ENCODE measurements at regions of chr1 and their contacts with region 1.

Region 1: GRCh38 chr1:193009501-193009900 is 49.7 kb downstream of the UCHL5 start:
- DNase-seq: no peak
- H3K4me3 ChIP-seq: no peak overlapping the region
- H3K4me3 Mint-ChIP-seq: no peak overlapping the region
- H3K27ac ChIP-seq: no peak overlapping the region
- H3K27ac Mint-ChIP-seq: peak overlapping the region in 3 of 7 donors; percentile 17 to 58 (median 52)
- H3K4me1 ChIP-seq: peaks cover 12 to 22% of the 10 kb centered on the region in 2 donors
- H3K4me1 Mint-ChIP-seq: peaks cover 22% of the 10 kb centered on the region
- H3K27me3 ChIP-seq: no peaks in the 10 kb centered on the region
- H3K27me3 Mint-ChIP-seq: no peaks in the 10 kb centered on the region
- CTCF ChIP-seq: no peak

Region 2: DNA sequence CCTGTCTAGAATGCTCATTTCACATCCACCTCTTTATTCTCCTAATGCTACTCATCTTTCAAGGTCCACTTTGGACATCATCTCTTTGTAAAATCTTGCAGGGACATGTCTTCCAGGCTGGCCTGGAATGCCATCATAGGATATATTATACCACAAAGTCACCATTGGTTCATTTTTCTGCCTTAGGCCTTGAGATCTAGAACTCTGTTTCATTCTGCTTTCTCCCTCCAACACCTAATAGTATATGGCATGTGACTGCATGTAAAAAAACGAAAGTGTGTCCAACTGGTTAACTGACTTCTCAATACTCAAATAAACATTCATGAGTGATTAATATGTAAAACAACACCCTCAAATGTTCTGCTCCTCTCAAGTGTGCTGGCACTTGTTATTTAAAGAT is 116.6 kb before region 1 on chr1:
- intact Hi-C with region 1: loop called in 1 of 2 experiments (anchors 10 kb)
- DNase-seq: no peak
- H3K4me3 ChIP-seq: no peak overlapping the region
- H3K4me3 Mint-ChIP-seq: no peak overlapping the region
- H3K27ac ChIP-seq: no peak overlapping the region
- H3K27ac Mint-ChIP-seq: no peak overlapping the region
- H3K4me1 ChIP-seq: no peaks in the 10 kb centered on the region
- H3K4me1 Mint-ChIP-seq: no peaks in the 10 kb centered on the region
- H3K27me3 ChIP-seq: no peaks in the 10 kb centered on the region
- H3K27me3 Mint-ChIP-seq: peaks cover 0 to 3% (median 3%) of the 10 kb centered on the region in 3 donors
- CTCF ChIP-seq: no peak

Region 3: GRCh38 chr1:193192586-193192985 is 183.1 kb after region 1 on chr1:
- intact Hi-C with region 1: no loop called
- DNase-seq: no peak
- H3K4me3 ChIP-seq: no peak overlapping the region
- H3K4me3 Mint-ChIP-seq: no peak overlapping the region
- H3K27ac ChIP-seq: no peak overlapping the region
- H3K27ac Mint-ChIP-seq: peak overlapping the region in 1 of 7 donors; percentile 30
- H3K4me1 ChIP-seq: no peaks in the 10 kb centered on the region
- H3K4me1 Mint-ChIP-seq: peaks cover under 1% of the 10 kb centered on the region
- H3K27me3 ChIP-seq: no peaks in the 10 kb centered on the region
- H3K27me3 Mint-ChIP-seq: no peaks in the 10 kb centered on the region
- CTCF ChIP-seq: no peak

Measured in CD14-positive monocyte (primary cell).